ENCODE measurements at regions of chr21 and their contacts with region 1.

Region 1: DNA sequence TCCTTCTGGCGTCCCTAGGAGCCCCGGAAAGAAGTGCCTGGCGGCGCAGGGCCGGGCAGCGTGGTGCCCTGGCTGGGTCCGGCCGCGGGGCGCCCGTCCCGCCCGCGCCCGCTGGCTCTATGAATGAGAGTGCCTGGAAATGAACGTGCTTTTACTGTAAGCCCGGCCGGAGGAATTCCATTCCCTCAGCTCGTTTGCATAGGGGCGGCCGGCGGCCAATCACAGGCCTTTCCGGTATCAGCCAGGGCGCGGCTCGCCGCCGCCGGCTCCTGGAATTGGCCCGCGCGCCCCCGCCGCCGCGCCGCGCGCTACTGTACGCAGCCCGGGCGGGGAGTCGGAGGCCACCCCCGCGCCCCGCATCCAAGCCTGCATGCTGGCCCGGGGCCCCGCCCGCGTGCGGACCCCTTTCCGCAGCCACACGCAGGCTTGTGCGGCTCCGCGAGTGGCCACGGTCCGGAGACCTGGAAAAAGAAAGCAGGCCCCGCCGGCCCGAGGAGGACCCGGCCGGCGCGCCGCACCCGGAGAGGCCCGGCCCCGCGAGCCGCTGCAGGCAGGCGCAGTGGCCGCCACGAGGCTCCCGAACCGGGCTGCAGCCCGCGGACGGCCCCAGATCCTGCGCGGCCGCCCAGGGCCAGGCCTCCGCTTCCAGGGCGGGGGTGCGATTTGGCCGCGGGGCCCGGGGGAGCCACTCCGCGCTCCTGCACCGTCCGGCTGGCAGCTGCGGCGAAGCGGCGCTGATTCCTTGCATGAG is 160.4 kb downstream of the RUNX1 start:
- DNase-seq: peak; percentile 93
- H3K4me3 ChIP-seq: peak overlapping the region; percentile 81
- H3K27ac ChIP-seq: peak overlapping the region; percentile 86 to 95
- H3K4me1 ChIP-seq: peaks cover 0 to 7% of the 10 kb centered on the region in 2 experiments; a peak in 2 of 4 replicates
- H3K27me3 ChIP-seq: no peaks in the 10 kb centered on the region
- CTCF ChIP-seq: no peak
- EP300 ChIP-seq: no peak
- RAD21 ChIP-seq: no peak

Region 2: DNA sequence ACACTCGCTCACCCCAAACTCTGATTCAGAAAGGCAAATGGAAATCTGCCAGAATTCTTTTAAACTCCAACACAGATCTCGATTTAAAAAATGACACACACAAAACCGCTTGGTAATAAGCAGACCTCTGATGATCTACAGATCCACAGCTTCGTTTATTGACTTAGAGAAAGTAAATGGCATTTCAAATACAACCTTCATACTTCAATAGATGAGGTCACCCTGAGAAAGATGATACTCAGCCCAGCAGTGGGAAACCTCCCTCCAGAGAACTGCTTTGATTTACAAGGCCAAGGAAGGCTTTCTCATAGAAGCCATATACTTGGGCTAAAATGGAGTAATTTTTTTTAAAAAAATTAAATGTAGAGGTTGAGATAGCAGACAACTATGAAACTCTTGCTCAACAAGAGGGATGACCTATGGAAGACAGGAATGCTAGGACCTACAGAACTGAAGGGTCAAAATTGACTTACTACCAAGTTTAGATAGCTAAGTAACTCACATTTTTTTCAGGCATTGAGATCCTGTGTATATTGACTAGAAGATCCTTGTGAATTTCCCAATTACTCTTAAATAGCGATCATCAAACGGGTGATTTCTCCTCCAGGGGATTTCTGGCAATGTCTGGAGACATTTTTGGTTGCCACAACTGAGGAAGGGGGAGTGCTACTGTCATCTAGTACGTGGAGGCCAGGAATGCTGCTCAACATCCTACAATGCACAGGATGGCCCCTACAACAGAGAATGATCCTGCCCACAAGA is 76.1 kb before region 1 on chr21:
- CTCF ChIA-PET with region 1: interaction called, 11 read pairs
- POLR2A ChIA-PET with region 1: no interaction called
- DNase-seq: no peak
- H3K4me3 ChIP-seq: peak overlapping the region in 1 of 2 experiments; percentile 6; a peak in 1 of 4 replicates
- H3K27ac ChIP-seq: peak overlapping the region; percentile 97 to 99
- H3K4me1 ChIP-seq: peaks cover 62 to 70% of the 10 kb centered on the region in 2 experiments
- H3K27me3 ChIP-seq: no peaks in the 10 kb centered on the region
- CTCF ChIP-seq: no peak
- EP300 ChIP-seq: peak; percentile 65 to 95
- RAD21 ChIP-seq: no peak

Region 3: DNA sequence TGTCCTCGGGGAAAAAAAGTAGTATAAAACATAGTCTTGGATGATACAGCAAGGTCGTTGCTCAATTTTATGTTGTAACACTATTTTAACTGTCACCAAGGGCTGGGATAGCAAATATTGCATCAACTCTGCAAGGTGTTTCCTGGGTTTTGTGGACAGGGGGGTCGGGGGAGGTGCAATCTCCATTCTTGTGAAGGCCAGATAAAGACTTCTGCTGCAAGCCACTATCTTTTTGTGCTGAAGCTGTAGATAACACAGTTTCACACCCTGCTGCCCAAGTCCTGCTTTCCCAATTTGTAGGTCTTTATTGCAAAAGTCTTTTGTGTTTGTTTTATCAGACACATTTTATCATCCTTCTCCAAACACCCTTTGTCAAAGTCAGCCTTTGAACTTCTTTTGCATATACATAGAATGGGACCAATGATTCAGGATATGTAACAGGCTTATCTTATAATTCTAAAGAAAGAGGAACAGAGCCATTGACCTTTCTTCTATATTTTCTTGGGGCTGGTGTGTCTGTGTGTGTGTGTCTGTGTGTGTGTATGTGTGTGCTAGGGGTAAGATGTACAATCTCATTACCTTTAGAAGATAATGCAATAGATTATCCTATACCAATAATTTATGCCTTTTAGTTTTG is 19.8 kb after region 1 on chr21:
- CTCF ChIA-PET with region 1: interaction called, 12 read pairs
- POLR2A ChIA-PET with region 1: no interaction called
- DNase-seq: no peak
- H3K4me3 ChIP-seq: no peak overlapping the region
- H3K27ac ChIP-seq: no peak overlapping the region
- H3K4me1 ChIP-seq: peaks cover 0 to 3% of the 10 kb centered on the region in 2 experiments; a peak in 1 of 4 replicates
- H3K27me3 ChIP-seq: no peaks in the 10 kb centered on the region
- CTCF ChIP-seq: no peak
- EP300 ChIP-seq: no peak
- RAD21 ChIP-seq: no peak

Region 4: GRCh38 chr21:35400233-35400957 is 511.7 kb after region 1 on chr21:
- CTCF ChIA-PET with region 1: interaction called, 11 read pairs
- POLR2A ChIA-PET with region 1: no interaction called
- DNase-seq: peak; percentile 43
- H3K4me3 ChIP-seq: no peak overlapping the region
- H3K27ac ChIP-seq: no peak overlapping the region
- H3K4me1 ChIP-seq: peaks cover 0 to 9% of the 10 kb centered on the region in 2 experiments; a peak in 2 of 4 replicates
- H3K27me3 ChIP-seq: no peaks in the 10 kb centered on the region
- CTCF ChIP-seq: peak; percentile 67
- EP300 ChIP-seq: no peak
- RAD21 ChIP-seq: peak; percentile 79

Region 5: DNA sequence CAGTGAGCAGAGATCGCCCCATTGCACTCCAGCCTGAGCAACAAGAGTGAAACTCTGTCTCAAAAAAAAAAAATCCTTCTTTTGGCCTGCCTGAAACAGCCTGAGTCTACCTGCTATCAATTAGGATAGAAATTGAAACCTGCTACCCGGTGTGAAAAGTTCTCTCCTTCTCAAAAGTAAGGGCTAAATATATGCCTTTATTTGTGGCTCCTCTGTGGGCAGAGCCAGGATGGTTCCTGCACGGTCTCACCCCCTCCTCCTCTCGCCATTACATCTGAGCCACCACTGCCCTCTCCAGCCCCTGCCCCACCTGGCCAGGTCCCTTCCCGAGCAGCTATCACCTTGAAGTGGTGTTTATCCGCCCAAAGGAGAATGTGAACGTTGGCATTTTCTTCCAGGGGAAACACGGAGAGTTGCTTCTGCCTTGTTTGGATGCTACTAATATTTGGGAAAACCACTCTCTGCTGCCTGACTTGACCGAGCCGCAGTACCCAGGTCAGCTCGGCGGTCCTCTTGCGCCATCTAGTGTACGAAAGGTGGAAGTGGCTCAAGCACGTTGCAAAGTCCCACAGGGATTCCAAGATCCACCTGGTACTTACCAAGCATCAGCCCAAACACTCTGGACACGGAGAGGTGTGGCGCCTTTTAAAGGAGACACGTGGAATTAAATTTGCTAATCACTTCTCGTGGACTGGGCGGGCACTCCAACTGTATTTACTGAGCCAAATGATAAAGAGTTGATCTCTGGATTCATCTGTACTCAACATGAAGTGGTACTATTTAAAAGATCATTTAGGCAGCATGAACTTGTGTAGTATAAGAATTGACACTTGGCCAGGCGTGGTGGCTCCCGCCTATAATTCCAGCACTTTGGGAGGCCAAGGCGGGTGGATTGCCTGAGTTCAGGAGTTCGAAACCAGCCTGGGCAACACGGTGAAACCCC is 1139.7 kb after region 1 on chr21:
- CTCF ChIA-PET with region 1: interaction called, 15 read pairs
- POLR2A ChIA-PET with region 1: no interaction called
- DNase-seq: peak; percentile 83
- H3K4me3 ChIP-seq: no peak overlapping the region; a peak in 1 of 4 replicates
- H3K27ac ChIP-seq: no peak overlapping the region
- H3K4me1 ChIP-seq: peaks cover 0 to 4% of the 10 kb centered on the region in 2 experiments; a peak in 1 of 4 replicates
- H3K27me3 ChIP-seq: no peaks in the 10 kb centered on the region
- CTCF ChIP-seq: peak; percentile 93
- EP300 ChIP-seq: no peak
- RAD21 ChIP-seq: peak; percentile 98